ENCODE measurements at regions of chr2 and their contacts with region 1.

Region 1: GRCh38 chr2:113700186-113700841 is 56.1 kb downstream of the SLC35F5 start:
- DNase-seq: peak; percentile 84
- CTCF ChIP-seq: peak; percentile 55

Region 2: GRCh38 chr2:112054847-112055729 is 1645.2 kb before region 1 on chr2 and contains the start of gene TMEM87B:
- CTCF ChIA-PET with region 1: no interaction called
- POLR2A ChIA-PET with region 1: no interaction called
- DNase-seq: peak; percentile 95
- CTCF ChIP-seq: no peak

Region 3: GRCh38 chr2:113602869-113603466 is 97.3 kb before region 1 on chr2:
- CTCF ChIA-PET with region 1: interaction called, 25 read pairs
- POLR2A ChIA-PET with region 1: interaction called, 6 read pairs
- DNase-seq: no peak
- CTCF ChIP-seq: no peak

Region 4: GRCh38 chr2:113716291-113716690 is 16.0 kb after region 1 on chr2:
- CTCF ChIA-PET with region 1: interaction called, 19 read pairs
- POLR2A ChIA-PET with region 1: no interaction called
- DNase-seq: no peak
- CTCF ChIP-seq: no peak

Region 5: DNA sequence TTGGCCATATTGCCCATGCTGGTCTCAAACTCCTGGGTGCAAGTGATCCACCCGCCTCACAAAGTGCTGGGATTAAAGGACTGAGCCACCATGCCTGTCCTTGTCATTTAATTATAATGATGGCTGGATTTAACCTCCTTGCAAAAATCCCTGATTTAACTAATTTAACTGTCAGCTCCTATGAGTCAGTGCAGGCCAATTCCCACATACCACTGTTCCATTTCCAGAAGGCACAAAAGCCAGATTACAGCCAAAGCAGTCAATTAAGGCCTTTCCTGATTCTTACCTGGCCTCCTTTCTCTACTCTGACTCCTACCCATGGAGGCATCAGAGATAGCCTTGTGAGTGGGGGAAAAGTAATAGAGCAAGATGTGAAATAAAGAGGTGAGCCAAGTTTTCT is 68.5 kb after region 1 on chr2:
- CTCF ChIA-PET with region 1: no interaction called
- POLR2A ChIA-PET with region 1: no interaction called
- DNase-seq: no peak
- CTCF ChIP-seq: no peak

Region 6: GRCh38 chr2:114331934-114332333 is 631.6 kb after region 1 on chr2:
- CTCF ChIA-PET with region 1: no interaction called
- POLR2A ChIA-PET with region 1: no interaction called
- DNase-seq: no peak
- CTCF ChIP-seq: no peak